Mammary epithelial cell (primary cell): ENCODE measurements at regions of chr13 and their contacts with region 1.

Region 1: DNA sequence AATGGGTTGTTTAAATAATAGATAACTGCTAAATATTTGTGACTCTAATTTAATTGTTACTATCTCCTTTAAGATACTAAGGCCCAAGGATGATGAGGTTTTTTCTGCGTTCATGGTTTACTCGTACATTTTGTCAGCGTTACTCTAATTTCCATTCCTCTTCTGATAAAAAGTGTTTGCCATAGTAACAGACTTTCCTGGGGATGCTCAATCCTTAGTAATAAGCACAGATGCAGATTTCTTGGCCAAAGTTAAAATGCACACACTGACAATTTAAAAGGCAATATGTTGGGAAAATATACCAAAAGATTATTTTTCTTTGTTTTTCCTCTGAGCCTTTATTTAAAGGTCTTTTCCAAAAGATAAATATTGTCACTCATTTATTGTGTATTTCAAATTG is 149.6 kb downstream of the IRS2 start:
- DNase-seq: no peak
- H3K4me3 ChIP-seq: no peak overlapping the region
- H3K27ac ChIP-seq: no peak overlapping the region
- H3K4me1 ChIP-seq: no peaks in the 10 kb centered on the region
- H3K27me3 ChIP-seq: no peaks in the 10 kb centered on the region
- CTCF ChIP-seq: no peak

Region 2: DNA sequence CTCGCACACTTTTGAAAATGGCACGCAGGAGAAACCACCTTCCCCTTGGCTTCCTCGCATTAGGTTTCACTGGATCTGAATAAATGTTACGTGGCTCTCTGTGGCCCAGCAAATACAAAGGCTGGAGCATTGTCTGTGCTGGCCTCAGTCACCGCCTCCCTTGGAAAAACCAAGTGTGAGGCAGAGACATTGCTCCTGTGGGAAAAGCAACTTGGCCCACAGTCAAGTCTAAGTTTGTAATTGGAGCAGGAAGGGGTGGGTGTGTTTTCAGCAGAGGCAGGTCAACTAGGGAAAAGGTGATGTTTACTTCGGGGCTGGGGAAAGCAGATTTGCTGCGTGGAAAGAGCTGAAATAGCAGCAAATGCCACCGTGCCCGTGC is 48.1 kb after region 1 on chr13:
- CTCF ChIA-PET with region 1: no interaction called
- dilution Hi-C with region 1: loop called (anchors 5 kb)
- in situ Hi-C with region 1: no loop called
- intact Hi-C with region 1: no loop called
- DNase-seq: peak; percentile 74
- H3K4me3 ChIP-seq: no peak overlapping the region
- H3K27ac ChIP-seq: no peak overlapping the region
- H3K4me1 ChIP-seq: no peaks in the 10 kb centered on the region
- H3K27me3 ChIP-seq: no peaks in the 10 kb centered on the region
- CTCF ChIP-seq: no peak